ENCODE measurements at regions of chr4 and their contacts with region 1.

Region 1: GRCh38 chr4:24537025-24537424 is 47.3 kb downstream of the DHX15 start:
- DNase-seq: peak in 4 of 7 donors; percentile 14 to 34 (median 23)
- H3K4me3 ChIP-seq: no peak overlapping the region
- H3K27ac ChIP-seq: no peak overlapping the region
- H3K4me1 ChIP-seq: peaks cover 0 to 14% of the 10 kb centered on the region in 2 donors
- H3K27me3 ChIP-seq: no peaks in the 10 kb centered on the region
- CTCF ChIP-seq: no peak
- POLR2A ChIP-seq: no peak

Region 2: GRCh38 chr4:24584175-24584850 is 47.3 kb after region 1 on chr4 and contains the start of gene DHX15:
- intact Hi-C with region 1: loop called in 1 of 2 experiments (anchors 10 kb)
- DNase-seq: peak; percentile 95 to 98 (median 97)
- H3K4me3 ChIP-seq: peak within 1 kb of the TSS; percentile 79 to 100 (median 82)
- H3K27ac ChIP-seq: peak within 1 kb of the TSS; percentile 94 to 99 (median 99)
- H3K4me1 ChIP-seq: peaks cover 9 to 28% of the 10 kb centered on the region in 2 donors
- H3K27me3 ChIP-seq: no peaks in the 10 kb centered on the region
- CTCF ChIP-seq: peak in 2 of 6 experiments; percentile 17 to 25
- POLR2A ChIP-seq: peak; percentile 15 to 76
- total RNA-seq, gene DHX15: 49.1 to 158 (median 81.0) TPM

Measured in adrenal gland (tissue), 19 donors.